Activated T-helper 2 cell treated with anti-CD3 and anti-CD28 coated beads, Interferon-gamma antibody, Interleukin-2, Interleukin-4, amounts not matched to agents 10 μg/mL and 5 μg/mL and 100 μg/mL, durations not matched to agents 14 hours and 24 hours and 36 hours (primary cell): ENCODE measurements at regions of chr10 and their contacts with region 1.

Region 1: GRCh38 chr10:100998991-100999741 is 442 bp upstream of the LZTS2 start:
- DNase-seq: peak; percentile 73
- H3K4me3 Mint-ChIP-seq: peak overlapping the region; percentile 90
- H3K27ac Mint-ChIP-seq: peak overlapping the region; percentile 91
- H3K4me1 Mint-ChIP-seq: peaks cover 18% of the 10 kb centered on the region
- H3K27me3 Mint-ChIP-seq: peaks cover 3% of the 10 kb centered on the region

Region 2: GRCh38 chr10:100535715-100536353 is 463.3 kb before region 1 on chr10 and contains the start of gene HIF1AN:
- intact Hi-C with region 1: loop called (anchors 5 kb)
- DNase-seq: peak; percentile 90
- H3K4me3 Mint-ChIP-seq: no peak within 1 kb of the TSS
- H3K27ac Mint-ChIP-seq: peak within 1 kb of the TSS; percentile 12
- H3K4me1 Mint-ChIP-seq: peaks cover 28% of the 10 kb centered on the region
- H3K27me3 Mint-ChIP-seq: no peaks in the 10 kb centered on the region
- total RNA-seq, gene HIF1AN: 46.7 and 47.9 TPM in 2 replicates

Region 3: DNA sequence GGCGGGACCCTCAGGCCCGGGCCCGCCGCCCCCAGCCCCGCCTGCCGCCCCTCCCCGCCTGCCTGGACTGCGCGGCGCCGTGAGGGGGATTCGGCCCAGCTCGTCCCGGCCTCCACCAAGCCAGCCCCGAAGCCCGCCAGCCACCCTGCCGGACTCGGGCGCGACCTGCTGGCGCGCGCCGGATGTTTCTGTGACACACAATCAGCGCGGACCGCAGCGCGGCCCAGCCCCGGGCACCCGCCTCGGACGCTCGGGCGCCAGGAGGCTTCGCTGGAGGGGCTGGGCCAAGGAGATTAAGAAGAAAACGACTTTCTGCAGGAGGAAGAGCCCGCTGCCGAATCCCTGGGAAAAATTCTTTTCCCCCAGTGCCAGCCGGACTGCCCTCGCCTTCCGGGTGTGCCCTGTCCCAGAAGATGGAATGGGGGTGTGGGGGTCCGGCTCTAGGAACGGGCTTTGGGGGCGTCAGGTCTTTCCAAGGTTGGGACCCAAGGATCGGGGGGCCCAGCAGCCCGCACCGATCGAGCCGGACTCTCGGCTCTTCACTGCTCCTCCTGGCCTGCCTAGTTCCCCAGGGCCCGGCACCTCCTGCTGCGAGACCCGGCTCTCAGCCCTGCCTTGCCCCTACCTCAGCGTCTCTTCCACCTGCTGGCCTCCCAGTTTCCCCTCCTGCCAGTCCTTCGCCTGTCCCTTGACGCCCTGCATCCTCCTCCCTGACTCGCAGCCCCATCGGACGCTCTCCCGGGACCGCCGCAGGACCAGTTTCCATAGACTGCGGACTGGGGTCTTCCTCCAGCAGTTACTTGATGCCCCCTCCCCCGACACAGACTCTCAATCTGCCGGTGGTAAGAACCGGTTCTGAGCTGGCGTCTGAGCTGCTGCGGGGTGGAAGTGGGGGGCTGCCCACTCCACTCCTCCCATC is 171.1 kb before region 1 on chr10:
- intact Hi-C with region 1: no loop called
- DNase-seq: no peak
- H3K4me3 Mint-ChIP-seq: peak overlapping the region; percentile 75
- H3K27ac Mint-ChIP-seq: peak overlapping the region; percentile 5
- H3K4me1 Mint-ChIP-seq: peaks cover 21% of the 10 kb centered on the region
- H3K27me3 Mint-ChIP-seq: peaks cover 75% of the 10 kb centered on the region

Region 4: GRCh38 chr10:100912605-100913469 is 86.3 kb before region 1 on chr10 and contains the start of gene SLF2:
- intact Hi-C with region 1: loop called (anchors 2 kb)
- DNase-seq: peak; percentile 94
- H3K4me3 Mint-ChIP-seq: peak within 1 kb of the TSS; percentile 96
- H3K27ac Mint-ChIP-seq: peak within 1 kb of the TSS; percentile 94
- H3K4me1 Mint-ChIP-seq: peaks cover 44% of the 10 kb centered on the region
- H3K27me3 Mint-ChIP-seq: no peaks in the 10 kb centered on the region
- total RNA-seq, gene SLF2: 32.2 and 34.0 TPM in 2 replicates

Region 5: DNA sequence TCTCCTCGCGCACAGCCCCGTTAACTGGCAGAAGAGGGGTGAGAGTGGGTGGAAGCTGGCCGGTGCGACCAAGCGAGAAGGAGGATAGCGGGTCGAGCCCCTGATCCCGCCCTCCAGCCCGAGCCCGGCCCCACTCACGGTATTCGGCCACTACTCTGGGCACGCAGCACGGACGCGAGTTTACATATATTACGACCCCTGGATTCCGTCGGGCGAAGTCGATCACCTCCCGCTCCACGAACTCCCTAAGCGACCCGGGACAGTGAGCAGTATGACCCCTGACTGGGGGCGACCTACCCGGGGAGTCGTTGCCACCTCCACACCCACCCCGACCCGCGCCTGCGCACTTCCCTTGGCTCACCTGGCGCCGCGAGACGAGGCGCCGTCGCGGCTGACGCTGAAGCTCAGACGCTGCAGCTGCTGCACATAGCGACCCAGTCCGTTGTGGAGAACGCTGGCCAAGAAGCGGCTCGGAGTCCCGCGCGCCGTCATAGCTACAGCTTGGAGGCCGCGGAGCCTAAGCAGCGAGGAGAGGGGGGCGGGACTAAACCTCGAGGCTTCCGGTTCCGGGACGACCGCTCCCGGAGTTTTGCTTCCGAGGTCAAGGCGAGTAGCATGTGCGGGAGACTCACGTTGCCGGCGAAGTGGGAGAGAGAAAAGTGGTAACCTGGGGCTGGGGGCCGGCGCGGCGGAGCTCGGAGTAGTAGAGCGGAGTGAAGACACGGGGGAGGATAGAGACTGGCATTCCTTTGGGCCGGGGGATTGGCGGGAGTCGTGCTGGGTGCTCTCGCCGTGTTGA is 12.0 kb before region 1 on chr10 and contains the starts of genes MRPL43 and TWNK:
- intact Hi-C with region 1: loop called (anchors 1 kb)
- DNase-seq: peak; percentile 77
- H3K4me3 Mint-ChIP-seq: peak within 1 kb of the TSS; percentile 96
- H3K27ac Mint-ChIP-seq: peak within 1 kb of the TSS; percentile 77
- H3K4me1 Mint-ChIP-seq: peaks cover 15% of the 10 kb centered on the region
- H3K27me3 Mint-ChIP-seq: no peaks in the 10 kb centered on the region
- total RNA-seq, gene MRPL43: 62.7 TPM in 2 replicates
- total RNA-seq, gene TWNK: 25.9 and 27.2 TPM in 2 replicates

Region 6: GRCh38 chr10:101012525-101013364 is 13.6 kb after region 1 on chr10:
- intact Hi-C with region 1: loop called (anchors 1 kb)
- DNase-seq: peak; percentile 68
- H3K4me3 Mint-ChIP-seq: no peak overlapping the region
- H3K27ac Mint-ChIP-seq: peak overlapping the region; percentile 6
- H3K4me1 Mint-ChIP-seq: peaks cover 23% of the 10 kb centered on the region
- H3K27me3 Mint-ChIP-seq: peaks cover 20% of the 10 kb centered on the region

Region 7: GRCh38 chr10:101031128-101031795 is 32.1 kb after region 1 on chr10 and contains the starts of genes PDZD7 and SFXN3:
- intact Hi-C with region 1: loop called (anchors 2 kb)
- DNase-seq: peak; percentile 94
- H3K4me3 Mint-ChIP-seq: peak within 1 kb of the TSS; percentile 85
- H3K27ac Mint-ChIP-seq: peak within 1 kb of the TSS; percentile 94
- H3K4me1 Mint-ChIP-seq: peaks cover 15% of the 10 kb centered on the region
- H3K27me3 Mint-ChIP-seq: peaks cover 21% of the 10 kb centered on the region
- total RNA-seq, gene PDZD7: 0.53 and 0.64 TPM in 2 replicates
- total RNA-seq, gene SFXN3: 41.3 and 44.3 TPM in 2 replicates

Region 8: GRCh38 chr10:101042667-101043355 is 43.6 kb after region 1 on chr10:
- intact Hi-C with region 1: no loop called
- DNase-seq: peak; percentile 84
- H3K4me3 Mint-ChIP-seq: peak overlapping the region; percentile 81
- H3K27ac Mint-ChIP-seq: peak overlapping the region; percentile 54
- H3K4me1 Mint-ChIP-seq: peaks cover 21% of the 10 kb centered on the region
- H3K27me3 Mint-ChIP-seq: peaks cover 36% of the 10 kb centered on the region

Region 9: GRCh38 chr10:101060036-101060950 is 61.1 kb after region 1 on chr10:
- intact Hi-C with region 1: loop called (anchors 1 kb)
- DNase-seq: peak; percentile 87
- H3K4me3 Mint-ChIP-seq: peak overlapping the region; percentile 95
- H3K27ac Mint-ChIP-seq: peak overlapping the region; percentile 85
- H3K4me1 Mint-ChIP-seq: peaks cover 27% of the 10 kb centered on the region
- H3K27me3 Mint-ChIP-seq: peaks cover 23% of the 10 kb centered on the region